Activated CD4-positive, alpha-beta T cell treated with anti-CD3 and anti-CD28 coated beads, Interleukin-2, amount 10 ng/mL, durations not matched to agents 7 days and 5 days (primary cell): ENCODE measurements at regions of chr19 and their contacts with region 1.

Region 1: GRCh38 chr19:12847159-12848139 is 9.1 kb downstream of the MAST1 start:
- DNase-seq: peak; percentile 80
- H3K4me3 Mint-ChIP-seq: no peak overlapping the region
- H3K27ac Mint-ChIP-seq: no peak overlapping the region
- H3K4me1 Mint-ChIP-seq: peaks cover 3% of the 10 kb centered on the region
- H3K27me3 Mint-ChIP-seq: peaks cover 15% of the 10 kb centered on the region

Region 2: DNA sequence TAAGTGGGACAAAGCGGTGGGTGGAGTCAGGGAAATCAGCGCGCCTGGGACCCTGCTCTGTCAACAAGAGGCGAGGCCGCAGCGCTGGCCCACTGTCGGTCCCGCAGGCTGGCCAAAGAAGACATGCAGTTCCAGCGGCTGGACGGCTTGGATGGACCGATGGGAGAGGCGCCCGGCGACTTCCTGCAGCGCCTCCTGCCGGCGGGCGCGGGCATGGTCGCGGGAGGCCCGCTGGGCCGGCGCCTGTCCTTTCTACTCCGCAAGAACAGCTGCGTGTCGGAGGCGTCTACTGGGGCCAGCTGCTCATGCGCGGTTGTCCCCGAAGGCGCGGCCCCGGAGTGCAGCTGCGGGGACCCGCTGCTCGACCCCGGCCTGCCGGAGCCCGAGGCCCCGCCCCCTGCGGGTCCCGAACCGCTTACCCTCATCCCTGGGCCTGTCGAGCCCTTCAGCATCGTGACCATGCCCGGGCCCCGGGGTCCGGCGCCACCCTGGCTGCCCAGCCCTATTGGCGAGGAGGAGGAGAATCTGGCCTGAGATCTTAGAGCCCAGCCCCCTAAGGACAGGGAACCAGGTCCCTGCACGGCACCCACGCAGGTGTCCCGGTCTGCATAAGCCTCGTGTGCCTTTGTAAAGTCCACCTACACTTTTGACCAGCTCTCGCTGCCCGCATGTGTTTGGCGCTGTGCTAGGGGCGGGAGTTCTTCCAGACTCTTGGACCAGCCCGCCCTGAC is 89.7 kb before region 1 on chr19:
- CTCF ChIA-PET with region 1: interaction called, 41 read pairs
- POLR2A ChIA-PET with region 1: no interaction called
- DNase-seq: peak; percentile 64
- H3K4me3 Mint-ChIP-seq: peak overlapping the region; percentile 27
- H3K27ac Mint-ChIP-seq: no peak overlapping the region
- H3K4me1 Mint-ChIP-seq: peaks cover 13% of the 10 kb centered on the region
- H3K27me3 Mint-ChIP-seq: peaks cover 4% of the 10 kb centered on the region

Region 3: DNA sequence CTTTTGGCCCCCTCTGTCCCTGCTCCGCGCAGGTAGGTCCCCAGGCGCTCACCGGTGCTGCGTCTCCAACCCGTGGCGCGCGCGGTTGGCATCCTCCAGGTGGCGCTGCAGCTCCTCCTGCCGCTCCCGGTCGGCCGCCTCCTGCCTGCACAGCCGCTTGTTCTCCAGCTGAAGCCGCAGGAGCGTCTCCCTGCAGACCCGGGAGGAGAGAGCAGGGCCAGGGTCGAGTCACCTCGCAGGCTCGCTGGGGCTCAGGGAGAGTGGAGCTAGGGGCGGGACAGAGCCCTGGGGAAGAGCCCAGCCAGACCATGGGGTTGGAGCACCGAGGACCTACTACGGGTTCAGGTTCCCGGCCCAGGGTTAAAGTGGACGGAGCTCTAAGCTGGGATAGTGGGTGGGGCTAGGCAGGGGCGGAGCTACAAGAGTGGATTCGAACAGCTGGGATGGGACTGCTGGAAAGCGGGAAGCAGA is 81.4 kb before region 1 on chr19:
- CTCF ChIA-PET with region 1: interaction called, 41 read pairs
- POLR2A ChIA-PET with region 1: no interaction called
- DNase-seq: peak; percentile 86
- H3K4me3 Mint-ChIP-seq: no peak overlapping the region
- H3K27ac Mint-ChIP-seq: no peak overlapping the region
- H3K4me1 Mint-ChIP-seq: peaks cover 13% of the 10 kb centered on the region
- H3K27me3 Mint-ChIP-seq: no peaks in the 10 kb centered on the region

Region 4: GRCh38 chr19:12789904-12790619 is 57.4 kb before region 1 on chr19:
- CTCF ChIA-PET with region 1: interaction called, 21 read pairs
- POLR2A ChIA-PET with region 1: no interaction called
- DNase-seq: peak; percentile 94
- H3K4me3 Mint-ChIP-seq: peak overlapping the region; percentile 93
- H3K27ac Mint-ChIP-seq: peak overlapping the region; percentile 94
- H3K4me1 Mint-ChIP-seq: peaks cover 39% of the 10 kb centered on the region
- H3K27me3 Mint-ChIP-seq: no peaks in the 10 kb centered on the region

Region 5: DNA sequence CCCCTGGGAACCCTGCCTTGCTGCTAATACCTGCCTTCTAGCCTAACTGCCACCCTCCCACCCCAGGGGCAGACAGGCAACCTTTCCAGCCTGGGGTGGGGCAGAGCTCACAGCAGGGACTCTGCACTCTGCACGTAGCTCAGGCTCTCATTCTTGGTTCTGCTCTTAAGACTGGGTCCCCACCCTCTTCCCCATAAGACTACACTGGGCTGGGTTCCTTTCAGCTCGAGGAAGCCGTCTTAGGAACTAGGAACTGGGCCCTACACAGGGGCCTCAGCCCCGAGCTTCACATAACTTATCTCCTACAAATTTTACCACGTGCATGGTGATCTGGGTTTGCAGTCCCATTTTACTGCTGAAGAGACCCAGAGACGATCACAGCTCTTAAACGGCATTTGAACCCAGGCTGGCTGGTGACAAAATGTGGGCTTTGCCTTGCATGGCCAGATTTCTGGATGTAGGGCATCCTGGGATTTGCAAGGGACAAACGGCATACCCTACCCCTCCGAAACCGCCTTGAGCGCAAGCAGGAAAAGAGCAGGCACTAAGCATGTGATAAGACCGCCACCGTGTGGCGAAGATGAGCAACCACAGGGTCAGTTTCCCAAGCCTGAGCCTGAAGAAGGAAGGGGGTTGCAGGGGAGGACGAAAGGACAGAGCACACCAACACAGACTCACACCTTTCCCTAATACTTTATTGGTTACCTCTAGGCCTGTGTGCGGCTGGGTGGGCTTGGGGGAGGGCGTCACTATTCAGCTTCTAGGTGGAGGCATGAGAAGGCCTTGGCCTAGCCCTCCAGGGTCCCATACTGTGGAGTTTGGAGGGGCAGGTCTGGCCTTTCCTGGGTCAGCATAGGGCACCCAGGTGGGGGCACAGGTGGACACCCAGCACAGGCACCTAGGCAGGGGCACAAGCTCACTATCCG is 51.0 kb before region 1 on chr19:
- CTCF ChIA-PET with region 1: interaction called, 21 read pairs
- POLR2A ChIA-PET with region 1: no interaction called
- DNase-seq: peak; percentile 82
- H3K4me3 Mint-ChIP-seq: peak overlapping the region; percentile 54
- H3K27ac Mint-ChIP-seq: peak overlapping the region; percentile 85
- H3K4me1 Mint-ChIP-seq: peaks cover 40% of the 10 kb centered on the region
- H3K27me3 Mint-ChIP-seq: no peaks in the 10 kb centered on the region

Region 6: DNA sequence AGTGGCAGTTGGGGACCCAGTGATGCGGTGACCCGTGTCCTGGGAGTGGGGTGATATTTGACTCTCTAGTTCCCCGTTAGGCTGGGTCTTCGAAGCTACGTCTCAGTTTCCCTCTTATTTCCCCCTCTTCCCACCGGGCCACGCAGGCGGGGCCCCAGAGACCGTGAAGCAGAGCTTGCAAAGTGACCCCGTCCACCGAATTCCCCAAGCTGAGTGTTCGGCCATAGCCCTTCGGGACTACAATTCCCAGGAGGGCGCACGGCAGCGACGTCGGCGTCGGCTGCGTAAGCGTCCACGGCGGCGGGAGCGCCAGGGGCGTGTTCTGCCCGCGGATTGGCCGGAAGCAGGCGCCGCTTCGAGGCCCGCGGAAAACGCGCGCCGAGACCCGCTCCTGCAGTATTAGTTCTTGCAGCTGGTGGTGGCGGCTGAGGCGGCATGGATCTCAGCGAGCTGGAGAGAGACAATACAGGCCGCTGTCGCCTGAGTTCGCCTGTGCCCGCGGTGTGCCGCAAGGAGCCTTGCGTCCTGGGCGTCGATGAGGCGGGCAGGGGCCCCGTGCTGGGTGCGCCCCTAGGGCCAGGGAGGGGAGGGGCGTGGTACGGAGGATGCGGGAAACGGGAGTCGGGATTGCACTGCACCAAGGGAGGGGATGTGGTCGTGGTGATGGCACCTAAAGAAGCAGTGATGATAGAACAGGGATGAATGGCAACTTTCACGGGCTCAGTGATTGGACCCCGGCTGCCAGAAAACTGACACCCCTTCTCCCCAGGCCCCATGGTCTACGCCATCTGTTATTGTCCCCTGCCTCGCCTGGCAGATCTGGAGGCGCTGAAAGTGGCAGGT is 41.0 kb before region 1 on chr19 and contains the start of gene RNASEH2A:
- CTCF ChIA-PET with region 1: interaction called, 10 read pairs
- POLR2A ChIA-PET with region 1: no interaction called
- DNase-seq: peak; percentile 90
- H3K4me3 Mint-ChIP-seq: peak within 1 kb of the TSS; percentile 94
- H3K27ac Mint-ChIP-seq: peak within 1 kb of the TSS; percentile 93
- H3K4me1 Mint-ChIP-seq: peaks cover 27% of the 10 kb centered on the region
- H3K27me3 Mint-ChIP-seq: no peaks in the 10 kb centered on the region
- total RNA-seq, gene RNASEH2A: 34.9 to 39.3 TPM

Region 7: GRCh38 chr19:12864721-12865715 is 17.6 kb after region 1 on chr19:
- CTCF ChIA-PET with region 1: interaction called, 10 read pairs
- POLR2A ChIA-PET with region 1: interaction called, 3 read pairs
- DNase-seq: no peak
- H3K4me3 Mint-ChIP-seq: no peak overlapping the region
- H3K27ac Mint-ChIP-seq: no peak overlapping the region
- H3K4me1 Mint-ChIP-seq: peaks cover 14% of the 10 kb centered on the region
- H3K27me3 Mint-ChIP-seq: peaks cover 7% of the 10 kb centered on the region